CD4-positive, alpha-beta memory T cell (primary cell): ENCODE measurements at regions of chr5 and their contacts with region 1.

Region 1: GRCh38 chr5:81838307-81838906 is 87.5 kb upstream of the SSBP2 start:
- DNase-seq: peak in 4 of 5 donors; percentile 33 to 45 (median 36)
- H3K4me3 ChIP-seq: no peak overlapping the region
- H3K4me3 Mint-ChIP-seq: peak overlapping the region in 1 of 8 donors; percentile 27
- H3K27ac ChIP-seq: no peak overlapping the region
- H3K27ac Mint-ChIP-seq: peak overlapping the region in 2 of 7 donors; percentile 58 to 67
- H3K4me1 ChIP-seq: no peaks in the 10 kb centered on the region
- H3K4me1 Mint-ChIP-seq: peaks cover 7 to 14% (median 9%) of the 10 kb centered on the region in 4 donors
- H3K27me3 ChIP-seq: no peaks in the 10 kb centered on the region
- H3K27me3 Mint-ChIP-seq: no peaks in the 10 kb centered on the region

Region 2: GRCh38 chr5:81425569-81425968 is 412.8 kb before region 1 on chr5:
- CTCF ChIA-PET with region 1: interaction called, 20 read pairs
- POLR2A ChIA-PET with region 1: no interaction called
- intact Hi-C with region 1: loop called (anchors 1 kb)
- DNase-seq: peak in 4 of 5 donors; percentile 49 to 59 (median 56)
- H3K4me3 ChIP-seq: no peak overlapping the region
- H3K4me3 Mint-ChIP-seq: peak overlapping the region in 1 of 8 donors; percentile 58
- H3K27ac ChIP-seq: no peak overlapping the region
- H3K27ac Mint-ChIP-seq: peak overlapping the region in 4 of 7 donors; percentile 5 to 73 (median 7)
- H3K4me1 ChIP-seq: no peaks in the 10 kb centered on the region
- H3K4me1 Mint-ChIP-seq: peaks cover 3 to 7% (median 5%) of the 10 kb centered on the region in 4 donors
- H3K27me3 ChIP-seq: no peaks in the 10 kb centered on the region
- H3K27me3 Mint-ChIP-seq: no peaks in the 10 kb centered on the region

Region 3: GRCh38 chr5:81506900-81507588 is 331.4 kb before region 1 on chr5:
- CTCF ChIA-PET with region 1: interaction called, 59 read pairs
- POLR2A ChIA-PET with region 1: no interaction called
- intact Hi-C with region 1: loop called (anchors 1 kb)
- DNase-seq: peak; percentile 36 to 52 (median 41)
- H3K4me3 ChIP-seq: no peak overlapping the region
- H3K4me3 Mint-ChIP-seq: no peak overlapping the region
- H3K27ac ChIP-seq: no peak overlapping the region
- H3K27ac Mint-ChIP-seq: no peak overlapping the region
- H3K4me1 ChIP-seq: no peaks in the 10 kb centered on the region
- H3K4me1 Mint-ChIP-seq: peaks cover 0 to 6% (median under 1%) of the 10 kb centered on the region in 4 donors
- H3K27me3 ChIP-seq: no peaks in the 10 kb centered on the region
- H3K27me3 Mint-ChIP-seq: no peaks in the 10 kb centered on the region

Region 4: GRCh38 chr5:81513982-81514381 is 324.4 kb before region 1 on chr5:
- CTCF ChIA-PET with region 1: interaction called, 59 read pairs
- POLR2A ChIA-PET with region 1: no interaction called
- intact Hi-C with region 1: loop called (anchors 1 kb)
- DNase-seq: peak in 4 of 5 donors; percentile 7 to 19 (median 12)
- H3K4me3 ChIP-seq: no peak overlapping the region
- H3K4me3 Mint-ChIP-seq: no peak overlapping the region
- H3K27ac ChIP-seq: no peak overlapping the region
- H3K27ac Mint-ChIP-seq: no peak overlapping the region
- H3K4me1 ChIP-seq: no peaks in the 10 kb centered on the region
- H3K4me1 Mint-ChIP-seq: peaks cover 0 to 3% (median under 1%) of the 10 kb centered on the region in 4 donors
- H3K27me3 ChIP-seq: no peaks in the 10 kb centered on the region
- H3K27me3 Mint-ChIP-seq: no peaks in the 10 kb centered on the region

Region 5: DNA sequence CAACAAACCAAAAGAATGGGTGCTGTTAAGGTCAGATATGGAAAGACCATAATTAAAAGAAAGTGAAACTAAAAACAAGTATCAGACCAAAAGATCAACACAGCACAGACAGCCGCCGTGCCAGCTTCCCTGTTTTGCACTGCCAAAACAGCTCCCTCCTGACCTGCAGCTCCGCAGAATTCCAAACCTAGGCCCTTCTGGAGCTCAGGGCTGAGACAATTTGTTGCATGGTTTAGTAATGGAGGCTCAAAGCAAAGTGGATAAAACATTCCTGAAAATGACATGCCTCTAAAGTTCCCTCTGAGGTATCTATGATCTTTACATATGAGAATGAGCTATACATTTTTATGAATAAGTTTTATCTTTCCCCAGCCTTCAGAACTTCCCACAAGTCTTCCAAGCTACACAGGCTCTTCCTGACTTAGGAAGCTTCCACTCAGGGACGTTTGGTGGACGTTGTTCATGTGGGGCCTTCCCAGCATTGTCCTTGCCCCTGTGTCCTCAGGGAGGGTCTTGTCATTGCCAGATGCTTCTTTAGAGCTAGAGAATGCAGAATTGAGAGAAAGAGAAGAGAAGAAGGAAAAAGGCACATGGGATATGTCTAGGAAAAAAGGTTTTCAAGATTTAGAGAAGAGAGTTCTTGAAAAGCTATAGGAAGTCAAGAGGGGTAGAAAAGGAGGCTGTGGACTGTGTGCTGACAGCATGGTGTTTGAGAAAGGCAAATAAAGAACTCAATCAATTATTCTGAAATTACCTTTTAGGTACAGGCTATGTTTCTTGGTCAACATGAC is 59.1 kb before region 1 on chr5:
- CTCF ChIA-PET with region 1: interaction called, 14 read pairs
- POLR2A ChIA-PET with region 1: interaction called, 4 read pairs
- intact Hi-C with region 1: no loop called
- DNase-seq: peak; percentile 18 to 48 (median 40)
- H3K4me3 ChIP-seq: peak overlapping the region; percentile 40 to 48
- H3K4me3 Mint-ChIP-seq: peak overlapping the region; percentile 84 to 92 (median 86)
- H3K27ac ChIP-seq: peak overlapping the region; percentile 69
- H3K27ac Mint-ChIP-seq: peak overlapping the region; percentile 85 to 97 (median 94)
- H3K4me1 ChIP-seq: peaks cover 17% of the 10 kb centered on the region
- H3K4me1 Mint-ChIP-seq: peaks cover 16 to 27% (median 20%) of the 10 kb centered on the region in 4 donors
- H3K27me3 ChIP-seq: no peaks in the 10 kb centered on the region
- H3K27me3 Mint-ChIP-seq: no peaks in the 10 kb centered on the region

Region 6: DNA sequence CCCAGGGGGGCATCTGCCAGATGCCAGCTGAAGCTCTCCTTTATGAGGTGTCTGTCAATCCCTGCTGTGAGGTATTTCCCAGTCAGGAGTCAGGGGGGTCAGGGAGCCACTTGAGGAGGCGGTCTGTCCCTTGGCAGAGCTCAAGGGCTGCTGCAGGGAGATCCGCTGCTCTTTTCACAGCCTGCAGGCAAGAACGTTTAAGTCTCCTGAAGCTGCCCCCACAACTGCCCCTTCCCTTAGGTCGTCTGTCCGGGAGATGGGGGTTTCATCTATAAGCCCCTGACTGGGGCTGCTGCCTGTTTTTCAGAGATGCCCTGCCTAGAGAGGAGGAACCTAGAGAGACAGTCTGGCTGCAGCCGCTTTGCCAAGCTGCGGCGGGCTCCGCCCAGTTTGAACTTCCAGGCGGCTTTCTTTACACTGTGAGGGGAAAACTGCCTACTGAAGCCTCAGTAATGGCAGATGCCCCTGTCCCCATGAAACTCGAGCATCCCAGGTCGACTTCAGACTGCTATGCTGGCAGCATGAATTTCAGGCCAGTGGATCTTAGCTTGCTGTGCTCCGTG is 291.4 kb after region 1 on chr5:
- CTCF ChIA-PET with region 1: no interaction called
- POLR2A ChIA-PET with region 1: no interaction called
- intact Hi-C with region 1: no loop called
- DNase-seq: no peak
- H3K4me3 ChIP-seq: no peak overlapping the region
- H3K4me3 Mint-ChIP-seq: no peak overlapping the region
- H3K27ac ChIP-seq: no peak overlapping the region
- H3K27ac Mint-ChIP-seq: no peak overlapping the region
- H3K4me1 ChIP-seq: no peaks in the 10 kb centered on the region
- H3K4me1 Mint-ChIP-seq: no peaks in the 10 kb centered on the region
- H3K27me3 ChIP-seq: no peaks in the 10 kb centered on the region
- H3K27me3 Mint-ChIP-seq: no peaks in the 10 kb centered on the region

Region 7: GRCh38 chr5:82165740-82166530 is 327.5 kb after region 1 on chr5:
- CTCF ChIA-PET with region 1: interaction called, 11 read pairs
- POLR2A ChIA-PET with region 1: no interaction called
- intact Hi-C with region 1: no loop called
- DNase-seq: peak; percentile 34 to 54 (median 50)
- H3K4me3 ChIP-seq: no peak overlapping the region
- H3K4me3 Mint-ChIP-seq: no peak overlapping the region
- H3K27ac ChIP-seq: no peak overlapping the region
- H3K27ac Mint-ChIP-seq: peak overlapping the region in 2 of 7 donors; percentile 3 to 12
- H3K4me1 ChIP-seq: no peaks in the 10 kb centered on the region
- H3K4me1 Mint-ChIP-seq: peaks cover 0 to 5% (median under 1%) of the 10 kb centered on the region in 4 donors
- H3K27me3 ChIP-seq: no peaks in the 10 kb centered on the region
- H3K27me3 Mint-ChIP-seq: no peaks in the 10 kb centered on the region

Region 8: DNA sequence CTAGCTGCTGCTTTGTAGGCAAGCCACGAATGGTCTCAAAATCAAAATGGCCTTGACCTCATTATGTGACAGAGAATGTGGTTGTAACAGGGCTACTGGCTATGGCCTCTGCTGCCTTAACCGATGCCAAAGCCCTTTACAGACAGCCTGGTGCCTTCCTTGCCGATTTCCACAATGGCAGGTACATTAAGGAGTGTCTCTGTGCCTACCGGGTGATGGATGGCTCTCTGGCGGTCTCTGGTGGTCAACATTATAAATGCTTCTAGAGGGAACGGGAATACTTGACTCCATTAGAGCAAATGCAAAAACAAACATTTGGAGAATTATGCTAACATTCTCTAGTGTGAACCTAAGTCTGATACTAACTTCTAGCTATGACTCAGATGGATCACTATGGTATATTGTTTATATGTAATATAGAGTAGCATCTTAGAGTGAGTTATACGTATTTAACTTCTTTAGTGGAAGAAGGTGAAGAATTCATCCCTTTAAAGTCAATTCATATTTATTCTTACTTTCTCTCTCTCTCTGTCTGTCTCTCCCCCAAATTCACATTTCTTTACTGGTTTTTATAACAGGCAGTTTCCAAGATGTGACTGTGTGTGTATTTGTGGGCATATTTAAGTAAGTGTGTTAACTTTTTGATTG is 387.2 kb after region 1 on chr5:
- CTCF ChIA-PET with region 1: interaction called, 6 read pairs
- POLR2A ChIA-PET with region 1: no interaction called
- intact Hi-C with region 1: loop called (anchors 5 kb)
- DNase-seq: peak; percentile 58 to 65 (median 63)
- H3K4me3 ChIP-seq: no peak overlapping the region
- H3K4me3 Mint-ChIP-seq: peak overlapping the region in 1 of 8 donors; percentile 51
- H3K27ac ChIP-seq: no peak overlapping the region
- H3K27ac Mint-ChIP-seq: peak overlapping the region in 2 of 7 donors; percentile 4 to 43
- H3K4me1 ChIP-seq: no peaks in the 10 kb centered on the region
- H3K4me1 Mint-ChIP-seq: peaks cover 3 to 14% (median 5%) of the 10 kb centered on the region in 4 donors
- H3K27me3 ChIP-seq: no peaks in the 10 kb centered on the region
- H3K27me3 Mint-ChIP-seq: no peaks in the 10 kb centered on the region